Pancreas (tissue), 10 donors: ENCODE measurements at regions of chr5 and their contacts with region 1.

Region 1: GRCh38 chr5:151825445-151825844 is 53.7 kb downstream of the G3BP1 start:
- DNase-seq: peak in 3 of 6 donors; percentile 24 to 57 (median 29)
- ATAC-seq: peak; percentile 67 to 92 (median 92)
- H3K4me3 ChIP-seq: no peak overlapping the region
- H3K27ac ChIP-seq: no peak overlapping the region
- H3K4me1 ChIP-seq: no peaks in the 10 kb centered on the region
- H3K27me3 ChIP-seq: no peaks in the 10 kb centered on the region
- CTCF ChIP-seq: peak; percentile 52 to 67 (median 62)

Region 2: GRCh38 chr5:151970885-151971284 is 145.4 kb after region 1 on chr5:
- intact Hi-C with region 1: no loop called
- DNase-seq: no peak
- ATAC-seq: no peak
- H3K4me3 ChIP-seq: no peak overlapping the region
- H3K27ac ChIP-seq: no peak overlapping the region
- H3K4me1 ChIP-seq: no peaks in the 10 kb centered on the region
- H3K27me3 ChIP-seq: no peaks in the 10 kb centered on the region
- CTCF ChIP-seq: no peak

Region 3: GRCh38 chr5:152142840-152143469 is 317.5 kb after region 1 on chr5:
- intact Hi-C with region 1: loop called in 2 of 3 experiments (anchors 10 kb)
- DNase-seq: peak; percentile 11 to 78 (median 38)
- ATAC-seq: peak; percentile 60 to 87 (median 74)
- H3K4me3 ChIP-seq: no peak overlapping the region
- H3K27ac ChIP-seq: no peak overlapping the region
- H3K4me1 ChIP-seq: no peaks in the 10 kb centered on the region
- H3K27me3 ChIP-seq: no peaks in the 10 kb centered on the region
- CTCF ChIP-seq: peak; percentile 69 to 89 (median 72)

Region 4: GRCh38 chr5:152505442-152506042 is 680.1 kb after region 1 on chr5:
- intact Hi-C with region 1: loop called in 1 of 3 experiments (anchors 10 kb)
- DNase-seq: peak in 4 of 6 donors; percentile 17 to 50 (median 22)
- ATAC-seq: peak in 3 of 4 donors; percentile 85 to 86 (median 85)
- H3K4me3 ChIP-seq: no peak overlapping the region
- H3K27ac ChIP-seq: no peak overlapping the region
- H3K4me1 ChIP-seq: no peaks in the 10 kb centered on the region
- H3K27me3 ChIP-seq: no peaks in the 10 kb centered on the region
- CTCF ChIP-seq: peak in 3 of 4 donors; percentile 52 to 58 (median 53)